OCI-LY7 (cell line): ENCODE measurements at regions of chr12 and their contacts with region 1.

Region 1: DNA sequence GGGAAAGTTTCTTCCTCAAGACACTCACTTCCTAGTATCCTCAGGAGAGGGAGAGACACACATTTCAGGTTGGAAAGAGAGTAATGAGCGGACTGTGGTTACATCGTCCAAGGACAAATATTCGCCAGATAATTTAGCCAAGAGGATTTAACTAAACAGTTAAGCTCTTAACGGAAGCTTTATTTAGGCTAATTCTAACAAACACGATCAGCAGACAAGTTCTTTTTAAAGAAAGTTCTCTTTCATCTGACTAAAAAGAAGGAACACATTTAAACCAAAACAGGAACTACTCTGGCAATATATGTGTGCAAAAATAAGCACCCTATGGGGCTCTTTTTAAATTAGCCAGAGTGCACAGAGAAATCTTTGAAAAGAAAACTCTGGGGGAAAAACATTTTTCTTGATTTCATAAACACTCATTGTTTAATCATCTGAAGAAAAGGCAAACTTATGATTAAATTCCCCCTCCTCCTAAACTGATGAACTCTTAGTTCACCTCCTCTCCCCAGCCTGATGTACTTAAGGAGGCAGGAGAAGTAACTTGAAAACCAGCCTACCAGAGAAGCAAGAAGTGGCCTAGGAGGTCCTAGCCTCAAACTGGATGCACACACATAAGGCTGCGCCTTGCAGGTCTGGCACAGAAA is 13.3 kb upstream of the BTG1 start:
- DNase-seq: peak; percentile 62
- H3K4me3 ChIP-seq: peak overlapping the region; percentile 57
- H3K27ac ChIP-seq: peak overlapping the region; percentile 77
- H3K4me1 ChIP-seq: peaks cover 45% of the 10 kb centered on the region
- CTCF ChIP-seq: no peak

Region 2: DNA sequence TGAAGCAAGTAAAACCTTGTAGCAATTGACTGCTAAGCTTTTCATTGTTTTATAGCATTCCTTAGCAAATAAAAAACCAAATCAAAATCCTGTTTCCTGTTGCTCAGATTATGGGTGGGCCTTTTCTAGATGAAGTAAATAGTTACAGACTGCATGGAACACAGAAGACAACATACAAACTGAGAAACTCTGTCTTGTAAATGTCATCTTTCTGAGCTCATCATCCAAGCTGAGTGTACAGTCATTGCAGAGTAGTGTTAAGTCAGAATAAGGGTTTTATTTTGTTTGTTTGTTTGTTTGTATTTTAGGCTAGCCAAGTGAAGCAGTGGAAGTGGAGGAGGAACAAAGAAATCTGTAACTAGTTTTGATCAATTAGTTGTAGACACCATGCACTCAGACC is 11.1 kb after region 1 on chr12:
- CTCF ChIA-PET with region 1: interaction called, 4 read pairs
- POLR2A ChIA-PET with region 1: interaction called, 58 read pairs
- intact Hi-C with region 1: no loop called
- DNase-seq: no peak
- H3K4me3 ChIP-seq: no peak overlapping the region
- H3K27ac ChIP-seq: no peak overlapping the region
- H3K4me1 ChIP-seq: peaks cover 35% of the 10 kb centered on the region
- CTCF ChIP-seq: no peak

Region 3: DNA sequence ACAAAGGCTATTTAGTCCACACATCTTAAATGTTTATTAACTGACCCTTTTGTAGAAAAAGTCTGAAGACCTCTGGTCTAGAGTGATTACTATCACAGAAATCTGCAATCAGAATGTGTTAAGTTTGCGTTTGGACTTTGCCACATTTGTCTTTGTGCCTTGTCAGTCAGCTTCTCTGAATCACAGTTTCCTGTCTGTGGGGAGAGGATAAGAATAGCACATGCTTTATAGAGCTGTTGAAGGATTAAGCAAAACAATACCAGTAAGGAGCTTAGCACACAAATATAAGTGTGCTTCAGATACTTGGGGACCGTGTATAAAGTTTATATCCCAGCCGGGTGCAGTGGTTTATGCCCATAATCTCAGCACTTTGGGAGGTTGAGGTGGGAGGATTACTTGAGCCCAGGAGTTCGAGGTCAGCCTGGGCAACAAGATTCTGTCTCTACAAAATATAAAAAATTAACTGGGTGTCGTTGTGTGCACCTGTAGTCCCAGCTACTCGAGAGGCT is 49.7 kb after region 1 on chr12:
- CTCF ChIA-PET with region 1: no interaction called
- POLR2A ChIA-PET with region 1: interaction called, 10 read pairs
- intact Hi-C with region 1: no loop called
- DNase-seq: peak; percentile 78
- H3K4me3 ChIP-seq: peak overlapping the region; percentile 46
- H3K27ac ChIP-seq: peak overlapping the region; percentile 61
- H3K4me1 ChIP-seq: peaks cover 32% of the 10 kb centered on the region
- CTCF ChIP-seq: no peak

Region 4: DNA sequence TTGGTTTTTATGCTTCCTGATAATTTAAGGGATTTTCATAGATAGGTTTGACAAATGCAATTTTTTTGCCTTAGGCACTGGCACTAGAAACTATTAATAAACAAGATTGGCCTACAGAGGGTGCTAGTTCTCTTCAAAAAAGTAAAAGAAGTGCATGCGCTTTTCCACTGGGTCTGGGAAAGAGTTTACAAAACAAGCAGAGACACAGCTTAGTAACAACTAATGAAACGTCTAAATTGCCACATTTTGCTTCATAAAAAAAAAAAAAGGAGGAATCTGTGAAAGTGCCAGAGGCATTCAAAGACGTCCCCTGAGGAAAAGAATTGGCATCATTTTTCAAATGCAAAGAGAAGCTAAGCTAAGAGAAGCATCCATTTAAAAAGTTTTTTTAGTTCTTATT is 828.4 kb after region 1 on chr12:
- CTCF ChIA-PET with region 1: no interaction called
- POLR2A ChIA-PET with region 1: no interaction called
- intact Hi-C with region 1: no loop called
- DNase-seq: peak; percentile 79
- H3K4me3 ChIP-seq: peak overlapping the region; percentile 54
- H3K27ac ChIP-seq: peak overlapping the region; percentile 88
- H3K4me1 ChIP-seq: peaks cover 45% of the 10 kb centered on the region
- CTCF ChIP-seq: peak; percentile 92